GM13976 (cell line): ENCODE measurements at regions of chr17 and their contacts with region 1.

Region 1: DNA sequence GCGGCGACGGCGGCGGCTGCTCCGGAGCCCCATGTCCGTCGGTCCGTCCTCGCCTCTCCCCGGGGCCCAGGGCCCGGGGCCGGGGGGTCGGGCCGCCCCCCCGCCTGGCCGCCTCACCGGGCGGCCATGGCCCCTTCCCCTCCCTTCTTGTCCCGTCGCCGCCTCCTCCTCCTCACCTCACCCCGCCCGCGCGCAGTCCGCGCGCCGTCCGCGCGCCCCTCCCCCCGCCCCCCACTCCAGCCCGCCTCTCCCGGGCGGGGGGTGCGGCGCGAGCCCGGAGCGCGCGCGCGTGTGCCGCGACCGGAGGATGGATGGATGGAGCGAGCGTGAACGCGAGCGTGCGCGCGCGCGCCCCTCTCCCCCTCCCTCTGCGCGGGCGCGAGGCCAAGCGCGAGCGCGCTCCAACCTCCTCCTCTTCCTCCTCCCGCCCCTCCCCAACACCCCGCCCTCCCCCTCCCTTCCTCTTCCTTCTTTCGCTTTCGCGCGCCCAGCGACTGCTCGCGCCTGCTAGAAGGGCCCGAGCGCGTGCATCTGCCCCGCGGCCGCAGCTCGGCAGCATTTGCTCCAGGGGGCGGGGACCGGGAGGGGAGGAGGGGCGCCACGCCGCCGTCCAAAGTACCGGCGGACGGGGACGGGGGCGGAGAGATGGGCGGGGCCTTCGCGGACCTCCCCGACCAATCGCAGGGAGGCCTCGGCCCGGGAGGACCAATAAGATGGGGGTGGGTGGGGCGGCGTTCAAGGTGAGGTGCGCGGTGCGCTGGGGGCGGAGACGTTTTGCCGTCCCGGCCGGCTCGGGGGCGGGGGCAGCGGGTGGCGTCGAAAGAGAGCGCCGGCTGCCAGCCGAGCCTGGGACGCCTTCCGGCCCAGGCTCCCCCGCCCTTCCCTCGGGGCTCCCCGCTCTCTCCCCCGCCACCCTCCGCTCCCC is at the start of gene ATXN7L3:
- DNase-seq: peak; percentile 99
- CTCF ChIP-seq: no peak

Region 2: GRCh38 chr17:44331249-44331760 is 131.5 kb after region 1 on chr17:
- in situ Hi-C with region 1: loop called (anchors 5 kb)
- DNase-seq: peak; percentile 83
- CTCF ChIP-seq: peak; percentile 71

Region 3: GRCh38 chr17:44354582-44355561 is 155.1 kb after region 1 on chr17:
- in situ Hi-C with region 1: no loop called
- DNase-seq: peak; percentile 83
- CTCF ChIP-seq: peak; percentile 70

Region 4: DNA sequence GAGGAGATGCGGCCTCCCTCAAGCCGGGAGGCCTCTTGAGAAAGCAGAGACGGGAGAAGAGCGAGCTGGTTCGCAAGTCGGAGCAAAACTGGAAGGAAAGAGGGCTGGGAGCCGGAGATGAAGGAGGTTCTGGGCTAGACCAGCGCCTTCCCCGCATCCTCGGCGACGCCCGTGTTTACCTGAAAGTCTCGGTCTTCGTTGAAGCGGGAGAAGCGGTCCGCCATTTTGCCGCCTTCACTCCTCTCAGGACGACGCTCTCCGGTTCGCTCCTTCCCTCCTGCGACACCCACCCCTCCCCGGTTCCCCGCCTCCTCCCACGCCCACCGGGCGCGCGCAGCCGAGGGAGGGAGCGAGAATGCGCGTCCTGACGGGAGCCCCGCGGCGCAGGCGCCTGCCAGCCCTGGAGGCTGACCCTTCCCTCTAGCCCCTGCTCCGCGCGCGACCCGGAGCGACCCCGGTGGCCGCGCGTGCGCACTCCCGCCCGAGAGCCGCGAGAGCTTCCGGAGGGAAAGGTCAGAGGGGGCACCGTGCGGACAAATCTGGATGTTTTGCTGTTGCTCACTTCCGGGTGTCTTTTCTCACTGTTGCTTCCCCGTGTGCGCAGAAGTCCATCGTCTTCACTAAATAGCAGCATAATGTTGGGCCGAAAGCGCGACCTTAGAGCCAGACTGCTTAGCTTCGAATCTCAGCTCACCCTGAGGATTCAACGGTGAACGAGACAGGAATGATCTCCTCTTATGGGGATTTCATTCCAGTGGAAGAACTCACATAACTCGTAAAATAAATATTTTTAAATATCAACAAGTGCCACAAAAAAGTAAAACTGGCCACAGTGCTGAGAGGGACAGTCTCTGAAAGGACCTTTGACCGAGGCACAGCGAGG is 303.6 kb after region 1 on chr17 and contains the start of gene GPATCH8:
- in situ Hi-C with region 1: loop called (anchors 25 kb)
- DNase-seq: peak; percentile 100
- CTCF ChIP-seq: no peak